ENCODE measurements at regions of chr2 and their contacts with region 1.

Region 1: DNA sequence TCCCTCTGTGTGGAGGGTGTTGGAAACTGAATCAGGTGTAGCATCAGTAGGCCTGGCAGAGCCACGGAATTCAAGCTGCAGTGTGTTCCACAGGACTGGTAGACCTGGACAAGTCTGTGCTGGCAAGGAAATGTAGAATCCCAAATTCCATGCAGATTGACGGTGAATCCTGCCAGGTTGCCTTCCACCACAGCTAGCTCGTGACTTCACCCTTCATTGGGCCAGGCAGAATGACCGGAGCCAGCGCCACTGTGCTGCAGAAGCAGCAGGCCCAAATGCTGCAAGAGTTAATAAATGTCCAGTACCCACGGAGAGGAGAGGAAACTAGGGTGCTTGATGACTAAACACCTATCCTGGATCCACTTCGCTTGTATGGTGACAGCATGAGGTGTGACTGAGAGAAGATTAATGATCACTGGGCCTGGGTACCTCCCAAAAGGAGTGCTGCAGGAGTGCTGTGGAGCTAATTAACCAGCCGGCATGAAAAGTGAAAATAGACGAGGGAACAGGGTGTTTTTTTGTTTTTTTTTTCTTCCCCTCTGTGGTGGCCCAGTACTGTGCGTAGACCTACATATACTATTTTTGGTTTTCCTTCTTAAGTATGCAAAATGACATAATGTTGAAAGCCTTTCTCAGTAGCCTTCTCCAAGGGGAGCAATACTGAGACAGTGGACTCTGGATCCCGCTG is 122.2 kb downstream of the TANC1 start:
- DNase-seq: peak; percentile 57
- H3K4me3 ChIP-seq: no peak overlapping the region
- H3K27ac ChIP-seq: peak overlapping the region; percentile 97
- H3K4me1 ChIP-seq: peaks cover 85% of the 10 kb centered on the region
- H3K27me3 ChIP-seq: no peaks in the 10 kb centered on the region
- CTCF ChIP-seq: no peak
- POLR2A ChIP-seq: no peak

Region 2: GRCh38 chr2:158903711-158904443 is 186.8 kb before region 1 on chr2:
- CTCF ChIA-PET with region 1: no interaction called
- POLR2A ChIA-PET with region 1: no interaction called
- dilution Hi-C with region 1: no loop called
- intact Hi-C with region 1: loop called (anchors 1 kb)
- DNase-seq: no peak
- H3K4me3 ChIP-seq: no peak overlapping the region
- H3K27ac ChIP-seq: no peak overlapping the region
- H3K4me1 ChIP-seq: no peaks in the 10 kb centered on the region
- H3K27me3 ChIP-seq: no peaks in the 10 kb centered on the region
- CTCF ChIP-seq: no peak
- POLR2A ChIP-seq: no peak

Measured in endothelial cell of umbilical vein (primary cell).